Activated CD4-positive, alpha-beta T cell treated with anti-CD3 and anti-CD28 coated beads for 36 hours (primary cell): ENCODE measurements at regions of chr2 and their contacts with region 1.

Region 1: GRCh38 chr2:64523666-64524603 is at the start of gene AFTPH:
- DNase-seq: peak; percentile 100
- ATAC-seq: peak; percentile 93
- H3K4me3 Mint-ChIP-seq: peak within 1 kb of the TSS; percentile 95
- H3K27ac Mint-ChIP-seq: peak within 1 kb of the TSS; percentile 100
- H3K4me1 Mint-ChIP-seq: peaks cover 30% of the 10 kb centered on the region
- H3K27me3 Mint-ChIP-seq: no peaks in the 10 kb centered on the region
- total RNA-seq, gene AFTPH: 32.3 to 35.2 TPM

Region 2: GRCh38 chr2:63588385-63589147 is 935.4 kb before region 1 on chr2 and contains the starts of genes MDH1 and WDPCP:
- CTCF ChIA-PET with region 1: no interaction called
- POLR2A ChIA-PET with region 1: interaction called, 4 read pairs
- intact Hi-C with region 1: loop called in 1 of 2 experiments (anchors 1 kb)
- DNase-seq: peak; percentile 96
- ATAC-seq: peak; percentile 92
- H3K4me3 Mint-ChIP-seq: peak within 1 kb of the TSS; percentile 100
- H3K27ac Mint-ChIP-seq: peak within 1 kb of the TSS; percentile 97
- H3K4me1 Mint-ChIP-seq: peaks cover 36% of the 10 kb centered on the region
- H3K27me3 Mint-ChIP-seq: no peaks in the 10 kb centered on the region
- total RNA-seq, gene MDH1: 212 to 265 TPM
- total RNA-seq, gene WDPCP: 6.5 to 8.2 TPM

Region 3: GRCh38 chr2:64214281-64215115 is 309.4 kb before region 1 on chr2:
- CTCF ChIA-PET with region 1: interaction called, 3 read pairs
- POLR2A ChIA-PET with region 1: no interaction called
- intact Hi-C with region 1: loop called in 1 of 2 experiments (anchors 2 kb)
- DNase-seq: peak; percentile 57
- ATAC-seq: peak; percentile 67
- H3K4me3 Mint-ChIP-seq: peak overlapping the region; percentile 64
- H3K27ac Mint-ChIP-seq: peak overlapping the region; percentile 97
- H3K4me1 Mint-ChIP-seq: peaks cover 64% of the 10 kb centered on the region
- H3K27me3 Mint-ChIP-seq: no peaks in the 10 kb centered on the region

Region 4: GRCh38 chr2:64562148-64562784 is 38.3 kb after region 1 on chr2:
- CTCF ChIA-PET with region 1: interaction called, 74 read pairs
- POLR2A ChIA-PET with region 1: interaction called, 3 read pairs
- intact Hi-C with region 1: loop called (anchors 1 kb)
- DNase-seq: no peak
- ATAC-seq: peak; percentile 44
- H3K4me3 Mint-ChIP-seq: no peak overlapping the region
- H3K27ac Mint-ChIP-seq: no peak overlapping the region
- H3K4me1 Mint-ChIP-seq: peaks cover 57% of the 10 kb centered on the region
- H3K27me3 Mint-ChIP-seq: no peaks in the 10 kb centered on the region

Region 5: DNA sequence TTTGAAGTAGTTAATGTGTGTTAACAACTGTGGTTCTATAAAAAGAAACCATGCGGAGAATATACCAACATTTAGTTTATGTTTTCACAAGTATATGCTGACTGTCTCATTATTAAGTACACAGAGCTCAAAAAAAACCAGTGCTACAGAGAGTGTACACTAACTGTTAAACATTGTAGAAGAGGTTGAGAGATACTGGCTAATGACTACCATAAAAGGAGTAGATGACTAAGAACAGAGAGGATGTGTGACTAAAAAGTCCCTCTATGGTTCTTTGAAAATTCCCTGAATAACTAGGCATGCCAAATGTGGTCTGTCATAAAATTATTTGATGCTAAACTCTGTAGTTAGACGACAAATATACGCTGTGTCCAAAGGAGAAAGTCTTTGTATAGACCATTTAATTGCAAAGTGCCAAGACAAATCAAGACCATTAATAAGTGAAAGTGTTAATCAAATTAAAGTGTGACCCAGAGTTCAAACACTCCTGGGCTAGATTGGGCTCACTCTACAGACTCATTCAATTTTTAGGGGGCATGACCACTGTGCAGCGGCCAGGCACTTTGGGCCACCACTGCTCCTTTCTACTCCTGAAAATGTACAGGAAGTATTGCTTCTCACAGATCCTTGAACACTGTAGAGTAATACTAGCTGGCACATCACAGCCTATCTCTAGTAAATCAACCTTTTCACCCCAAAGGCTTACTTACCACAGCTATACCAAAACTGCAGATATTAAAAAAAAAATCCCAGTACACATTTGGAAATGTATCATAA is 174.9 kb after region 1 on chr2:
- CTCF ChIA-PET with region 1: no interaction called
- POLR2A ChIA-PET with region 1: no interaction called
- intact Hi-C with region 1: loop called in 1 of 2 experiments (anchors 1 kb)
- DNase-seq: no peak
- ATAC-seq: peak; percentile 89
- H3K4me3 Mint-ChIP-seq: no peak overlapping the region
- H3K27ac Mint-ChIP-seq: peak overlapping the region; percentile 70
- H3K4me1 Mint-ChIP-seq: peaks cover 54% of the 10 kb centered on the region
- H3K27me3 Mint-ChIP-seq: no peaks in the 10 kb centered on the region

Region 6: DNA sequence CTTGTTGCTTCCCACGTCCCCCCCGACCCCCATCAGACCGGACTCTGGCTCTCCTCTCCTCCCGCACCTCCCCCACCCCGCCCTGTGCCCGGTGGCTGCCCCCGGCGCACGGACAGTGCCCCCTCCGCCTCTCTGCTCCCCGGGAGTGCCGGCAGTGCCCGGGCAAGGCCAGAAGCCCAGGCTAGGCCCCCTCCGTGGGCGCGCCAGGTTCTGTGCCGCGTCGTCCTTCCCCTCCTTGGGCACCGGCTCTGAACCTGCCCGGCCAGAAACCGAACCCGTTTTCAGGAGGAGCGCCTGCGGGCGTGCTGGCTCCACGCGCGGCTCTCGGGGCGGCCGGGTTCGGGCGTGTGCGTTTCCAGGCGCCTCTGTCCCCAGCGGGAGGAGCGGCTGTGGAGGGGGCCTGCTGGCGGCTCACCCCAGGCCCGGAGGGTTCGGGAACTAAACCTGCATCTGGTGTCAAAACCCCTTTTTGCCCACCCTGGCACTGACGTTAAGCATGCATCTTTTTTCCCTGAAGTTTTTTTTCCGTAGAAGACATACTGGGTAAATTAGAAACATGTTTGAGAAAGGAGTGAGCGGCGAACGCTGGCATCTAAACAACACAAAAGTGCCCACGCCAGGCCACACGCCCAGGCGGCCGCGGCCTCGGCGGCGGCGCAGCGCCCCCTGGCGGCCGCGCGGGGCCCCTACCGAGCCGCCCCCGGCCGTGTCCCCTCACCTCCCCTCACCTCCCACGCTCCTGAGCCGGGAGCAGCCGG is 341.3 kb after region 1 on chr2:
- CTCF ChIA-PET with region 1: interaction called, 20 read pairs
- POLR2A ChIA-PET with region 1: interaction called, 4 read pairs
- intact Hi-C with region 1: loop called (anchors 1 kb)
- DNase-seq: peak; percentile 78
- ATAC-seq: peak; percentile 74
- H3K4me3 Mint-ChIP-seq: peak overlapping the region; percentile 52
- H3K27ac Mint-ChIP-seq: no peak overlapping the region
- H3K4me1 Mint-ChIP-seq: no peaks in the 10 kb centered on the region
- H3K27me3 Mint-ChIP-seq: peaks cover 6% of the 10 kb centered on the region

Region 7: GRCh38 chr2:65056215-65057053 is 532.5 kb after region 1 on chr2 and contains the start of gene CEP68:
- CTCF ChIA-PET with region 1: interaction called, 12 read pairs
- POLR2A ChIA-PET with region 1: interaction called, 4 read pairs
- intact Hi-C with region 1: loop called (anchors 1 to 2 kb)
- DNase-seq: peak; percentile 98
- ATAC-seq: peak; percentile 94
- H3K4me3 Mint-ChIP-seq: peak within 1 kb of the TSS; percentile 93
- H3K27ac Mint-ChIP-seq: peak within 1 kb of the TSS; percentile 84
- H3K4me1 Mint-ChIP-seq: peaks cover 55% of the 10 kb centered on the region
- H3K27me3 Mint-ChIP-seq: no peaks in the 10 kb centered on the region
- total RNA-seq, gene CEP68: 4.9 to 6.0 TPM